HCT116 (cell line): ENCODE measurements at regions of chr3 and their contacts with region 1.

Region 1: DNA sequence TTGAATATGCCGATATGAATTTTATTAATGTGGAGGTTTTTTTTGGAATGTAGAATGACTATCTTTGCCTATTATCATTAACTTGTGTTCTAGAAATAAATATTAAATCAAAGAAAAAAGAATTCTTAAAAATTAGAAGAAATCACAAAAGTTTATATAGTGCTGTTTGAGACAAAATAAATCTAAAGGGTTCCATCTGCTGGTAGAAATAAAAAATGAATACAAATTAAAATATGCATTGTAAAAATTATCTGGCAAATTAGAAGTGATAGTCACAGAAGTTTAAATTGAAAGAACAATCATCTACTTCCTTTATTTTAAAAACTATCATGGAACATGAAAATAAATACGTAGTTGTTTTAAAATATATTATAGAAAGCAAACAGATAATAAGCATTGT is 22.7 kb upstream of the ZBTB20 start:
- DNase-seq: no peak
- ATAC-seq: no peak
- H3K4me3 ChIP-seq: no peak overlapping the region
- H3K27ac ChIP-seq: no peak overlapping the region
- H3K4me1 ChIP-seq: no peaks in the 10 kb centered on the region
- H3K27me3 ChIP-seq: no peaks in the 10 kb centered on the region
- CTCF ChIP-seq: peak in 2 of 3 experiments; percentile 27 to 48; a peak in 2 of 6 replicates
- POLR2A ChIP-seq: no peak
- RAD21 ChIP-seq: peak; percentile 54

Region 2: GRCh38 chr3:114362815-114363214 is 807.0 kb before region 1 on chr3:
- CTCF ChIA-PET with region 1: no interaction called
- POLR2A ChIA-PET with region 1: no interaction called
- RAD21 ChIA-PET with region 1: no interaction called
- intact Hi-C with region 1: loop called (anchors 10 kb)
- DNase-seq: peak; percentile 33
- ATAC-seq: peak; percentile 80
- H3K4me3 ChIP-seq: no peak overlapping the region
- H3K27ac ChIP-seq: peak overlapping the region; percentile 41; the same call in 1 of the 2 replicates
- H3K4me1 ChIP-seq: peaks cover 20 to 28% of the 10 kb centered on the region in 2 experiments
- H3K27me3 ChIP-seq: no peaks in the 10 kb centered on the region
- CTCF ChIP-seq: peak; percentile 41 to 59 (median 43); a peak in 5 of 6 replicates
- POLR2A ChIP-seq: no peak
- RAD21 ChIP-seq: peak; percentile 72

Region 3: DNA sequence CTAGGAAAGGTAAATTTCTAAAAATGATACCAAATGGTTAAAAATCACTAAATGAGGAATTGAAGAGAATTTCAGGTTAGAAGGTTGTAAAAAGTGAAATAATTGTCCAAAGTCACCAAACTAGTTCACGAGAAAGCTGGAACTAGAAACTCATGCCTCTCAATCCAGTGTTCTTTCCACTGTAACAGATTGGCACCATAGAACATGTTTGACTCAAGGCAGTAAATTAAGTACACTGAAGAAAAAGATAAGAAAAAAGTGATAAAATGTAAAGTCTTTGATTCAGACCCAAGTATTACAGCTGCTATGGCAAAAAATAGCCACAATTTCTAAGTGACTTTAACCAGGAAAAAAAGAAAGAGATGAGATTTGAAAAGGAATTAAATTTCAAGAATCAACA is 49.2 kb before region 1 on chr3:
- CTCF ChIA-PET with region 1: no interaction called
- POLR2A ChIA-PET with region 1: no interaction called
- RAD21 ChIA-PET with region 1: no interaction called
- intact Hi-C with region 1: no loop called
- DNase-seq: no peak
- ATAC-seq: no peak
- H3K4me3 ChIP-seq: no peak overlapping the region
- H3K27ac ChIP-seq: no peak overlapping the region
- H3K4me1 ChIP-seq: no peaks in the 10 kb centered on the region
- H3K27me3 ChIP-seq: no peaks in the 10 kb centered on the region
- CTCF ChIP-seq: no peak
- POLR2A ChIP-seq: no peak
- RAD21 ChIP-seq: no peak

Region 4: DNA sequence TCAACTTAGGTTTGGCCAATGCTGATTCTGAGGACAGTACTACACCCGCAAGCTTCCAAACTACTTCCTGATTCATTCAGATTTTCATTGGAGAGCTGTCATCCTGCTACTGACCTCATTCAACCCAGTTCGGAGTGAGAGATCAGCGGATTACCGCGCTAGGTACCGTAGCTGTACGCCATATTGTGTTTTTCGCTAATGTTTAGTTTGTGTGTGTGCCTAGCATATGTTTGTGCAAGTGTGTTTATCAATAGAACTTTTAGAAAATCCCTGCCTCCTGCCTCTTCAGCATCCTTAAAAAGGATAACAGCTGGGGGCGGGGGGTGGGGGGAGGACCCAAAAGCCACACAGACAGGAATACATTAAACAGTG is 23.8 kb before region 1 on chr3:
- CTCF ChIA-PET with region 1: no interaction called
- POLR2A ChIA-PET with region 1: no interaction called
- RAD21 ChIA-PET with region 1: no interaction called
- intact Hi-C with region 1: no loop called
- DNase-seq: peak; percentile 19
- ATAC-seq: no peak
- H3K4me3 ChIP-seq: peak overlapping the region; percentile 75 to 79
- H3K27ac ChIP-seq: peak overlapping the region; percentile 69
- H3K4me1 ChIP-seq: peaks cover 9 to 17% of the 10 kb centered on the region in 2 experiments; a peak in 3 of 4 replicates
- H3K27me3 ChIP-seq: no peaks in the 10 kb centered on the region
- CTCF ChIP-seq: no peak
- POLR2A ChIP-seq: no peak
- RAD21 ChIP-seq: no peak